HepG2 (cell line): ENCODE measurements at regions of chr19 and their contacts with region 1.

Region 1: GRCh38 chr19:54390942-54391577 is 24.2 kb upstream of the TTYH1 start:
- DNase-seq: peak; percentile 70
- ATAC-seq: peak; percentile 67
- H3K4me3 ChIP-seq: no peak overlapping the region
- H3K27ac ChIP-seq: no peak overlapping the region
- H3K4me1 ChIP-seq: peaks cover 13% of the 10 kb centered on the region
- H3K27me3 ChIP-seq: peaks cover 0 to 18% of the 10 kb centered on the region in 2 experiments; a peak in 4 of 5 replicates
- CTCF ChIP-seq: peak; percentile 80
- EP300 ChIP-seq: no peak
- POLR2A ChIP-seq: no peak
- RAD21 ChIP-seq: no peak; the same call in 1 of the 2 replicates

Region 2: GRCh38 chr19:54325194-54325621 is 65.9 kb before region 1 on chr19:
- CTCF ChIA-PET with region 1: interaction called, 13 read pairs
- POLR2A ChIA-PET with region 1: no interaction called
- in situ Hi-C with region 1: no loop called
- intact Hi-C with region 1: loop called (anchors 1 kb)
- DNase-seq: peak; percentile 30
- ATAC-seq: peak; percentile 59
- H3K4me3 ChIP-seq: no peak overlapping the region
- H3K27ac ChIP-seq: no peak overlapping the region
- H3K4me1 ChIP-seq: peaks cover 4% of the 10 kb centered on the region; the same call in 1 of the 2 replicates
- H3K27me3 ChIP-seq: 0 out of 5 replicates have a peak, but pooled peaks cover 0 to 3% of the 10 kb centered on the region in 2 experiments
- CTCF ChIP-seq: peak; percentile 70
- EP300 ChIP-seq: no peak
- POLR2A ChIP-seq: no peak
- RAD21 ChIP-seq: no peak

Region 3: GRCh38 chr19:54352041-54352440 is 39.0 kb before region 1 on chr19:
- CTCF ChIA-PET with region 1: no interaction called
- POLR2A ChIA-PET with region 1: no interaction called
- in situ Hi-C with region 1: no loop called
- intact Hi-C with region 1: loop called (anchors 5 kb)
- DNase-seq: no peak
- ATAC-seq: peak; percentile 38; the same call in 2 of the 3 replicates
- H3K4me3 ChIP-seq: no peak overlapping the region
- H3K27ac ChIP-seq: no peak overlapping the region
- H3K4me1 ChIP-seq: no peaks in the 10 kb centered on the region
- H3K27me3 ChIP-seq: peaks cover 0 to 4% of the 10 kb centered on the region in 2 experiments; a peak in 2 of 5 replicates
- CTCF ChIP-seq: no peak
- EP300 ChIP-seq: no peak
- POLR2A ChIP-seq: no peak
- RAD21 ChIP-seq: no peak